ENCODE measurements at regions of chr1 and their contacts with region 1.

Region 1: DNA sequence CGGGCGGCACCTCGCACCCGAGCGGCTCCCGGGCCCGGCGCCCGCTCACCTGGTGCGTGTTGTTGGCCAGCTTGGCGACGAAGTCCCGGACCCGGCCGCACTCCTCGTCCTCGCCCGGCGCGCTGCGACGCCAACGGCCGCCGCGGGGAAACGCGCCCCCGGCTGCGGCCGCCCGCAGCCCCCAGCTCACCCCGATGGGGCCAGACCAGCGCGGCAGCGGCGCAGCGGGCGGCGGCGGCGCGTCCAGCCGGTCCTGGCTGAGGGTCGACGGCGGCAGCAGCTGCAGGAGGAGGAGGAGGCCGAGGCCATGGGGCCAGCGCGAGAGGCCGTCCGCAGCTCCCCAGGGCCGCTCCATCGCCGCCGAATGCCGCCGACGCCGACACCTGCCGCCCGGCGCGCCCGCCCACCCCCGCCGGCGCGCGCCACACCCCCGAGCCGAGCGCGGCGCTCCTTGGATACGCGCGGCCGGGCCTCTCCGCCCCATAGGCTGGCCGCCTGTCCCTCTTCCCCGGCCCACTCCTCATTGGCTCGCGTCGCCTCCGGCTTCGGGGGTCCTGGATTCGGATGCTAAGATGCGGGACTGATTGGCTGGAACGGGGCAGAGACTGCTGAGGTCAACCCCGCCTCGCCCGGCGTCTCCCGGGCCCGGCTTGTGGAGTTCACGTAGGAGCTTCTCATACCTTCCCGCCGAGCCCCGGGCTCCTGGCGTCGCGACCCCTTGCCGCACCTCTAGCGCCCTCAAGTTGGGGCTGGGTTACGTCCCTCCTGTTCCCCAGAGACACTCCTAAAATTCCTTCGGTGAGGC is at the start of gene SORT1:
- DNase-seq: peak; percentile 70 to 85
- ATAC-seq: peak; percentile 42 to 55
- H3K4me3 ChIP-seq: peak within 1 kb of the TSS; percentile 60 to 75 (median 68)
- H3K27ac ChIP-seq: peak within 1 kb of the TSS; percentile 83 to 97 (median 90)
- H3K4me1 ChIP-seq: peaks cover 48 to 74% of the 10 kb centered on the region in 2 donors
- H3K27me3 ChIP-seq: no peaks in the 10 kb centered on the region
- CTCF ChIP-seq: peak in 3 of 5 experiments; percentile 11 to 34 (median 34)
- POLR2A ChIP-seq: peak; percentile 95 to 96
- total RNA-seq, gene SORT1: 93.7 to 226 (median 190) TPM

Region 2: DNA sequence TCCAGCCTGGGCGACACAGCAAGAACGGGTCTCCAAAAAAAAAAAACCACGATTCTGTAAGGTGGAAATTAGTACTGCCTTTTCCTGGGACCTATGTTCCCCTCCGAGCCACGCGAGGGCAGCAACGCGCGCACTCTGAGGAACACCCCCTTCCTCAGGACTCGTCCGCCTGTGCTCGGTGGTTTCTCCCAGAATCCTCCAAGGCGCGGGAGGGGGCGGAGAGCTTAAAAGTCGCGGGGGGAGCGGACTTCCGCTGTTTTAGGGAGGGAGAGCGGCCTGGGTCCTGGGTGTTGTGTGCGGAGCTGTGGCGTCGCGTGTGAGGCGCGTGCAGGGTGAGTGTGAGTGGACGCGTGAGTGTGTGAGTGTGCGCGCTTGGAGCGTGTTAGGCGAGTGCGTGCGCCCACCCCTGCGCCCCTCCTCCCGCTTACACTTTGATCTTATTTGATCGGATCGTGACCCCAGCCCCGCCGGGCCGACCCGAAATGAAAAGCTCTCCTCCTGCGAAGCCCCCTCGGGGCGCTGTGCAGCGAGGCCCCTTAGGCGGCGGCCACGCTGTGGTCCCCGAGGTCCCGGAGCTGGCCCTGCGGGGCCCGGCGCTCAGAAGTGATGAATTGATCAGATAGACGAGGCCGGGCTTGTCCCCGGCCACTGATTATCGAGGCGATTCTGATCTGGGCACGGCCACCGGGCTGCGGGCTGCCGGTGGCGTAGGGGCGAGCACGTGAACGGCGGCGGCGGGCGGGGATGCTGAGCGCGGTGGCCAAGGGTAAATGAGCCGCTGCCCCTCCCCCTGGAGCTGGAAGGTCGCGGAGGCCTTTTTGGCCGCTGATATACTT is 297.6 kb before region 1 on chr1:
- in situ Hi-C with region 1: no loop called
- intact Hi-C with region 1: loop called (anchors 10 kb)
- DNase-seq: peak; percentile 96 to 97
- ATAC-seq: peak; percentile 97 to 98
- H3K4me3 ChIP-seq: peak overlapping the region; percentile 76 to 99 (median 93)
- H3K27ac ChIP-seq: peak overlapping the region; percentile 96 to 100 (median 98)
- H3K4me1 ChIP-seq: peaks cover 16 to 23% of the 10 kb centered on the region in 2 donors
- H3K27me3 ChIP-seq: no peaks in the 10 kb centered on the region
- CTCF ChIP-seq: peak; percentile 80 to 92 (median 85)
- POLR2A ChIP-seq: peak; percentile 94 to 95

Region 3: DNA sequence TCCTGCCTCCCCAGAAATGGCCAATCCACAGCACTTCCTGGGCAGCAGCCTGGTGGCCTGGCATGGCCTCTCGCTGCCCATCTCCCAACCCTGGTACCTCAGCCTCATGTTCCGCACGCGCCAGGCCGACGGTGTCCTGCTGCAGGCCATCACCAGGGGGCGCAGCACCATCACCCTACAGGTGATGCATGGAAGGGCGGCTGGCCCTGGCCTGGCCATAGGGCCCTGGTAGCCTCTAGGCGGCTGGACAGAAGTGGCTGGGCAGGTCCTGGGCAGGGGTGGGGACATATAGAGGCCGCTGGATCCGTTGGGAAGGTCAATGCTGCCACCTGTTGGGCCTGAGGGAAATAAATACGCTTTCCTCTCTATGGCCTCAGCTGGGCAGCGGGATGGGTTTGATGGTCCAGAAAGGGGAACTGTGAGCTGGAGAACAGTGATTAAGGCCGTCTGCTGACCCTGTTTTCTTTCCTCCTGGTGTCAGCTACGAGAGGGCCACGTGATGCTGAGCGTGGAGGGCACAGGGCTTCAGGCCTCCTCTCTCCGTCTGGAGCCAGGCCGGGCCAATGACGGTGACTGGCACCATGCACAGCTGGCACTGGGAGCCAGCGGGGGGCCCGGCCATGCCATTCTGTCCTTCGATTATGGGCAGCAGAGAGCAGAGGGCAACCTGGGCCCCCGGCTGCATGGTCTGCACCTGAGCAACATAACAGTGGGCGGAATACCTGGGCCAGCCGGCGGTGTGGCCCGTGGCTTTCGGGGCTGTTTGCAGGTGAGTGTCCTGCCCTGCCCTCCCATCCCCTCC is 133.9 kb before region 1 on chr1:
- in situ Hi-C with region 1: loop called in 1 of 4 experiments (anchors 10 kb)
- intact Hi-C with region 1: loop called (anchors 1 kb)
- DNase-seq: peak; percentile 52 to 76
- ATAC-seq: peak; percentile 59 to 78
- H3K4me3 ChIP-seq: no peak overlapping the region
- H3K27ac ChIP-seq: no peak overlapping the region
- H3K4me1 ChIP-seq: no peaks in the 10 kb centered on the region
- H3K27me3 ChIP-seq: no peaks in the 10 kb centered on the region
- CTCF ChIP-seq: peak; percentile 87 to 98 (median 93)
- POLR2A ChIP-seq: no peak

Region 4: GRCh38 chr1:109282952-109283747 is 114.6 kb before region 1 on chr1 and contains the start of gene PSRC1:
- in situ Hi-C with region 1: loop called (anchors 5 to 10 kb)
- intact Hi-C with region 1: no loop called
- DNase-seq: peak; percentile 95 to 96
- ATAC-seq: peak; percentile 94 to 98
- H3K4me3 ChIP-seq: peak within 1 kb of the TSS; percentile 64 to 72 (median 64)
- H3K27ac ChIP-seq: peak within 1 kb of the TSS; percentile 79 to 93 (median 86)
- H3K4me1 ChIP-seq: peaks cover 13 to 19% of the 10 kb centered on the region in 2 donors
- H3K27me3 ChIP-seq: no peaks in the 10 kb centered on the region
- CTCF ChIP-seq: peak in 4 of 5 experiments; percentile 43 to 71 (median 59)
- POLR2A ChIP-seq: peak; percentile 66 to 68
- total RNA-seq, gene PSRC1: 0.19 to 2.3 (median 0.84) TPM in 3 of 4 donors, not detected in the other

Region 5: DNA sequence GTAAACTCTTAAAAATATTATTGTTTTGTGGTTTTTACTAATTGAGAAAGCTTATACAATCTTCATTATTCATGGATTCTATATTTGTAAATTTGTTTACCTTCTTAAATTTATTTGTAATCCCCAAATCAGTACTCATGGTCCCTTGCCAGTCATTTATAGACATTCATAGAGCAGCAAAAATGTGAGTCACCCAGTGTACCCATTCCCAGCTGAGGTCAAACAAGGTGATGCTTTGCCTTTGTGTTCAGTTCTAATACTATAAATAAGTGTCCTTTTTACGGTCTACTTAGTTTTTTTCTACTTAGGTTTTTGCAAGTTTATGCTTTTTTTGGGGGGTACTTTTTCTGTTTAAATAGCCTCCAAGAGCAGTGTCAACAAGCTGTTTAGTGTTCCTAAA is 36.1 kb before region 1 on chr1:
- in situ Hi-C with region 1: no loop called
- intact Hi-C with region 1: loop called (anchors 5 kb)
- DNase-seq: no peak
- ATAC-seq: peak; percentile 77 to 85
- H3K4me3 ChIP-seq: no peak overlapping the region
- H3K27ac ChIP-seq: peak overlapping the region; percentile 14 to 93 (median 46)
- H3K4me1 ChIP-seq: peaks cover 51% of the 10 kb centered on the region in 2 donors
- H3K27me3 ChIP-seq: no peaks in the 10 kb centered on the region
- CTCF ChIP-seq: no peak
- POLR2A ChIP-seq: no peak